ENCODE measurements at regions of chr1 and their contacts with region 1.

Region 1: GRCh38 chr1:152398812-152399698 is 15.0 kb downstream of the CRNN start:
- DNase-seq: peak in 2 of 9 experiments; percentile 30 to 48
- ATAC-seq: no peak
- H3K4me3 ChIP-seq: no peak overlapping the region
- H3K4me3 Mint-ChIP-seq: no peak overlapping the region
- H3K27ac ChIP-seq: no peak overlapping the region
- H3K27ac Mint-ChIP-seq: no peak overlapping the region
- H3K4me1 ChIP-seq: no peaks in the 10 kb centered on the region
- H3K4me1 Mint-ChIP-seq: peaks cover 6% of the 10 kb centered on the region
- H3K27me3 ChIP-seq: no peaks in the 10 kb centered on the region
- H3K27me3 Mint-ChIP-seq: peaks cover 13% of the 10 kb centered on the region
- CTCF ChIP-seq: no peak

Region 2: GRCh38 chr1:152440635-152441471 is 41.8 kb after region 1 on chr1:
- CTCF ChIA-PET with region 1: interaction called, 7 read pairs
- POLR2A ChIA-PET with region 1: no interaction called
- intact Hi-C with region 1: loop called in 1 of 2 experiments (anchors 5 kb)
- DNase-seq: peak; percentile 35 to 82 (median 63)
- ATAC-seq: peak; percentile 95
- H3K4me3 ChIP-seq: no peak overlapping the region
- H3K4me3 Mint-ChIP-seq: no peak overlapping the region
- H3K27ac ChIP-seq: no peak overlapping the region
- H3K27ac Mint-ChIP-seq: no peak overlapping the region
- H3K4me1 ChIP-seq: no peaks in the 10 kb centered on the region
- H3K4me1 Mint-ChIP-seq: peaks cover 3% of the 10 kb centered on the region
- H3K27me3 ChIP-seq: no peaks in the 10 kb centered on the region
- H3K27me3 Mint-ChIP-seq: peaks cover 27% of the 10 kb centered on the region
- CTCF ChIP-seq: peak; percentile 75

Region 3: GRCh38 chr1:153842006-153842471 is 1443.0 kb after region 1 on chr1:
- CTCF ChIA-PET with region 1: no interaction called
- POLR2A ChIA-PET with region 1: no interaction called
- intact Hi-C with region 1: no loop called
- DNase-seq: no peak
- ATAC-seq: no peak
- H3K4me3 ChIP-seq: no peak overlapping the region
- H3K4me3 Mint-ChIP-seq: no peak overlapping the region
- H3K27ac ChIP-seq: no peak overlapping the region
- H3K27ac Mint-ChIP-seq: peak overlapping the region; percentile 50
- H3K4me1 ChIP-seq: no peaks in the 10 kb centered on the region
- H3K4me1 Mint-ChIP-seq: peaks cover 26% of the 10 kb centered on the region
- H3K27me3 ChIP-seq: no peaks in the 10 kb centered on the region
- H3K27me3 Mint-ChIP-seq: no peaks in the 10 kb centered on the region
- CTCF ChIP-seq: no peak